BJ (cell line): ENCODE measurements at regions of chr3 and their contacts with region 1.

Region 1: GRCh38 chr3:148073731-148074456 is 623.8 kb upstream of the AGTR1 start:
- DNase-seq: no peak
- H3K4me3 ChIP-seq: no peak overlapping the region
- H3K27me3 ChIP-seq: no peaks in the 10 kb centered on the region
- CTCF ChIP-seq: no peak

Region 2: GRCh38 chr3:147838650-147839049 is 235.2 kb before region 1 on chr3:
- CTCF ChIA-PET with region 1: interaction called, 11 read pairs
- POLR2A ChIA-PET with region 1: no interaction called
- DNase-seq: no peak
- H3K4me3 ChIP-seq: no peak overlapping the region
- H3K27me3 ChIP-seq: no peaks in the 10 kb centered on the region
- CTCF ChIP-seq: peak; percentile 48